Activated CD4-positive, alpha-beta T cell treated with anti-CD3 and anti-CD28 coated beads for 36 hours (primary cell): ENCODE measurements at regions of chr1 and their contacts with region 1.

Region 1: DNA sequence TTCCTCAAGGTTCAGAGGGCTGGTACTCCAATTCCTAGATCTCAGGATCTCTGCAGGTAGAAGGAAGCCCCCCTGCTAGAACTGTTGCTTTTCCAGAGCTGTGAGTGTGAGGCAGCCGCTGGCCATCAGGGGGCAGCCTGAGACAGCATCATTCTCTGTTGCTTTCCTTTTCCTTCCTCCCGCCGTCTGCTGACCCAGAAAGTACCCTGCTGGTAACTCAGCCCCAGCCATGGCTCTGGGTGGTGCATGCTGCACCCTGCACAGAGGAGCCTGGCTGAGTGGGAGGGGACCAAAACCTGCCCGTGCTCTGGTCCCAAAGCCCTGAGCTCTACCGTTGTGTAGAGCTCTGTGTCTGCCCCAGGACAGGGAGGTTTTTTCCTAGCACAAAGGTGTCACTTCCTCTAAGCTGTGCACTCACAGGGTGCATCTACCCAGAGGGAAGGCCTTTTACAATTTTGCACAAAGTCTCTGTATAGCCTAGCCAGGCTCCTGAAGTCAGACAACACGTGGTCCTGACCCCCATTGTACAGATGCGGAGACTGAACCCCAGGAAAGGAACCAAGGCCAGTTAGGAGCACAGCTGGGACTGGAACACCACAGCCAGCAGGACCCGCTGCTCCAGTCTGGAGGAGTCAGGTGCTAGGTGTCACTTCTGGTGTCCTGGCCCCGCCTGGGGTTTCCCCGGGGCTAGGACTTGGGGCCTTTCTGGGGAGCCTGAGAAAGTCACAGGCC is 5.6 kb upstream of the FAM131C start:
- DNase-seq: peak; percentile 81
- ATAC-seq: peak; percentile 83
- H3K4me3 Mint-ChIP-seq: peak overlapping the region; percentile 57
- H3K27ac Mint-ChIP-seq: peak overlapping the region; percentile 86
- H3K4me1 Mint-ChIP-seq: peaks cover 9% of the 10 kb centered on the region
- H3K27me3 Mint-ChIP-seq: peaks cover 5% of the 10 kb centered on the region

Region 2: DNA sequence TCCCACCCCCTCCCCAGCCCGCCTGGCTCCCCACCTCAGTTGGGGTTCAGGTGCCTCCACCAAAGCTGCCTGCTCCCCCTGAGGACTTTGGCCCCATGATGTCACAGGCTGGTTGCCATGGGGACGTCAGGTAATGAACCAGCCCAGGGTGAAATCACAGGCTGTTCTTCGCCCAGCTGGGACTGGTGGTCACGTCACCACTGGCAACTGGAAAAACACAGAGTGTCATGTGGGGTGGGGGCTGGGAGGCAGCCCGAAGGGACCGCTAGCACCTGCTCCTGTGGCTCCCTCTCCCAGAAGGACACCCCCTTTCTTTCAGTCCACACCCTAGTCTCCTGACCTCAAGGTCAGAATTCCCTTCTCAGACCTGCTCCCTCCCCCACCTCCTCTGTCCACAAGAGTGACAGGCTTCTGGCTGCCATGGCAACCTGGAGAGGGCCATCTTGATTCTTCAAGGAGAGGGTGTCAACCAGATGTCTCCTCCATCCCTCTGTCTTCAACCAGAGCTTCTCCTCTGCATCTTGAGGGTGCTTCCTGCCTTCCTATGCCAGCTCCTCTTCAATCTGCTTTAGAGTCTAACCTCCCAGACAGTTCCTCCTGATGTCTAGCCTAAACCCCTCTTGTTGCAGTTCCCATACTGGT is 11.8 kb before region 1 on chr1:
- CTCF ChIA-PET with region 1: interaction called, 67 read pairs
- POLR2A ChIA-PET with region 1: no interaction called
- intact Hi-C with region 1: no loop called
- DNase-seq: peak; percentile 27
- ATAC-seq: no peak
- H3K4me3 Mint-ChIP-seq: no peak overlapping the region
- H3K27ac Mint-ChIP-seq: no peak overlapping the region
- H3K4me1 Mint-ChIP-seq: peaks cover 4% of the 10 kb centered on the region
- H3K27me3 Mint-ChIP-seq: peaks cover 8% of the 10 kb centered on the region

Region 3: GRCh38 chr1:16162163-16162822 is 83.2 kb after region 1 on chr1:
- CTCF ChIA-PET with region 1: interaction called, 12 read pairs
- POLR2A ChIA-PET with region 1: interaction called, 6 read pairs
- intact Hi-C with region 1: no loop called
- DNase-seq: peak; percentile 67
- ATAC-seq: peak; percentile 54
- H3K4me3 Mint-ChIP-seq: peak overlapping the region; percentile 21
- H3K27ac Mint-ChIP-seq: no peak overlapping the region
- H3K4me1 Mint-ChIP-seq: peaks cover 62% of the 10 kb centered on the region
- H3K27me3 Mint-ChIP-seq: no peaks in the 10 kb centered on the region

Region 4: GRCh38 chr1:16180291-16180824 is 101.3 kb after region 1 on chr1:
- CTCF ChIA-PET with region 1: interaction called, 219 read pairs
- POLR2A ChIA-PET with region 1: no interaction called
- intact Hi-C with region 1: no loop called
- DNase-seq: no peak
- ATAC-seq: no peak
- H3K4me3 Mint-ChIP-seq: no peak overlapping the region
- H3K27ac Mint-ChIP-seq: no peak overlapping the region
- H3K4me1 Mint-ChIP-seq: no peaks in the 10 kb centered on the region
- H3K27me3 Mint-ChIP-seq: no peaks in the 10 kb centered on the region

Region 5: GRCh38 chr1:16187748-16188401 is 108.8 kb after region 1 on chr1:
- CTCF ChIA-PET with region 1: interaction called, 219 read pairs
- POLR2A ChIA-PET with region 1: interaction called, 3 read pairs
- intact Hi-C with region 1: loop called (anchors 1 kb)
- DNase-seq: peak; percentile 86
- ATAC-seq: peak; percentile 94
- H3K4me3 Mint-ChIP-seq: no peak overlapping the region
- H3K27ac Mint-ChIP-seq: no peak overlapping the region
- H3K4me1 Mint-ChIP-seq: peaks cover 3% of the 10 kb centered on the region
- H3K27me3 Mint-ChIP-seq: peaks cover 6% of the 10 kb centered on the region

Region 6: GRCh38 chr1:16243936-16244649 is 165.0 kb after region 1 on chr1:
- CTCF ChIA-PET with region 1: interaction called, 12 read pairs
- POLR2A ChIA-PET with region 1: no interaction called
- intact Hi-C with region 1: loop called (anchors 1 kb)
- DNase-seq: peak; percentile 87
- ATAC-seq: peak; percentile 79
- H3K4me3 Mint-ChIP-seq: no peak overlapping the region
- H3K27ac Mint-ChIP-seq: no peak overlapping the region
- H3K4me1 Mint-ChIP-seq: peaks cover 10% of the 10 kb centered on the region
- H3K27me3 Mint-ChIP-seq: no peaks in the 10 kb centered on the region